Ovary (tissue), 10 donors: ENCODE measurements at regions of chr4 and their contacts with region 1.

Region 1: GRCh38 chr4:154332681-154333421 is 158.7 kb downstream of the DCHS2 start:
- DNase-seq: peak; percentile 24 to 67 (median 50)
- H3K4me3 ChIP-seq: peak overlapping the region; percentile 19
- H3K27ac ChIP-seq: no peak overlapping the region
- H3K4me1 ChIP-seq: no peaks in the 10 kb centered on the region
- H3K27me3 ChIP-seq: no peaks in the 10 kb centered on the region
- CTCF ChIP-seq: no peak
- EP300 ChIP-seq: no peak
- POLR2A ChIP-seq: no peak

Region 2: DNA sequence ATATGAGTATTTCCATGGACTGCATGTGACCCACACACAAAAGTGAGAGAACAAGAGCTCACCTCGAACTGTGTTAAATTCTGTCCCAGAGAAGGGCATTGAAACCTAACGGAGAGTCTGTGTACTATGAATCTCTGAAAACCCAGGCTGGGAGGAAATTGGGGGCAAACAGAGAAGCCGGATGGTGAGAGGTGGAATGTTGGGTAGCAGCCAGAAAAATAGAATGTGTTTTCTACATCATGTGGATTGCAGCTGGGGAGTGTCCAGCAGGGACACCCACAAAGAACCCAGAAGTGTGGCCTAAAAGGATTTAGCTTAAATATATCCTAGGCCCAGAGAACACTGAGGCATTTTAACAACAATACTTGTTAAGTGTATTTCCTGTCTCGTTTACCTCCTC is 949.7 kb before region 1 on chr4:
- intact Hi-C with region 1: no loop called
- DNase-seq: no peak
- H3K4me3 ChIP-seq: no peak overlapping the region
- H3K27ac ChIP-seq: no peak overlapping the region
- H3K4me1 ChIP-seq: no peaks in the 10 kb centered on the region
- H3K27me3 ChIP-seq: no peaks in the 10 kb centered on the region
- CTCF ChIP-seq: no peak
- EP300 ChIP-seq: no peak
- POLR2A ChIP-seq: no peak

Region 3: GRCh38 chr4:154491341-154492271 is 158.8 kb after region 1 on chr4 and contains the start of gene DCHS2:
- intact Hi-C with region 1: loop called in 1 of 4 experiments (anchors 10 kb)
- DNase-seq: peak; percentile 26 to 56 (median 44)
- H3K4me3 ChIP-seq: peak within 1 kb of the TSS; percentile 49
- H3K27ac ChIP-seq: no peak within 1 kb of the TSS
- H3K4me1 ChIP-seq: peaks cover 8% of the 10 kb centered on the region
- H3K27me3 ChIP-seq: no peaks in the 10 kb centered on the region
- CTCF ChIP-seq: no peak
- EP300 ChIP-seq: no peak
- POLR2A ChIP-seq: no peak
- total RNA-seq, gene DCHS2: 1.1 to 8.7 (median 3.9) TPM

Region 4: DNA sequence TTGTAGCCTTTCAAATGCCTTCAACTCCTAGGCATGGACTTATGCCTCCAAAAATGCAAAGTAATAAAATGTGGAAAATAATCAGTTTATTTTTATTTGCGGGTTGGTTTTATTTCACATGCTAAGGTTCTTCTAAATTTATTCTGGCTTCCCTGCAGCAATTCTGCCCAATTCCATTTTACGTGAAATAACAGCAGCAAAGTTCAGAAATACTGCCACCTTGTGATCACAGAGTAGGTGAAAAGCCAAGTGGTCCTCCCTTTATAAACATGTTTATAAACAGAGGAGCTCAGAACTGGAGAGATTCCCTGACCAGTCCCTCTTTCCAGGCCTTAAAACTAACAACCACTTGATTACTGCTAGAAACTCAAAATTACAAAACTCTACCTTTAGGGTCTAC is 173.4 kb after region 1 on chr4:
- intact Hi-C with region 1: loop called in 1 of 4 experiments (anchors 5 kb)
- DNase-seq: no peak
- H3K4me3 ChIP-seq: no peak overlapping the region
- H3K27ac ChIP-seq: no peak overlapping the region
- H3K4me1 ChIP-seq: no peaks in the 10 kb centered on the region
- H3K27me3 ChIP-seq: no peaks in the 10 kb centered on the region
- CTCF ChIP-seq: peak in 1 of 3 donors; percentile 41
- EP300 ChIP-seq: no peak
- POLR2A ChIP-seq: no peak